A673 (cell line): ENCODE measurements at regions of chr6 and their contacts with region 1.

Region 1: DNA sequence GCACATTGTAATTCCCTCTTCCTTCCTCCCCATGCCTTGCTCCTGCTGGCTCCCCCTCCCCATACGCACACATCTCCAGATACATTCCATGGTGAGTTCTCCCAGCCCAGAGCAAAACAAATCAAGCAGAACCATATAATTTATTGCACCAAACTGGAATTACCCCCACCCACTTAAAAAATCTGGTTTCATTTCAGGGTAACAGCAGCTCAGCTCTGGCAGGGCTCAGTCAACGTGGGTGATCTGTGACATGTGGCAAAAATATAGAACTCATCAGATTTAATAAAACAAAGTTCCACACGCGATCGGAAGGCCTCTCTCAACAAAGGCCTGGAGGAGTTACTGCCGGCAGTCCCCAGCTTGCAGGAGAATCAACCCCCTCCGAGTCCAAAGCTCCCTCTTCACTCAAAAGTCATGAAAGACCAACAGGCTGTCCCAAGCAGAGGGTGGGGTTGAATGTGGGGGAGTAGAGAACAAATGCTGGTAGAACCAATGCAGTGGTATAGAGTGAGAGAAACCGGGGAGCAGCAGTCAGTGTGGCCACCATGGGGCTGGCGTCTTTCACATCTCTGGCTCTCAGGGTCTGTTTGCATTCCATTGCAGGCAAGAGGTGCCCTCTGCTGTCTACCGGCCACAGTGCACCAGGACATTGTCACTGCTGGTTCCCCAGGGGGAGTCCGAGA is 323.3 kb upstream of the NT5E start:
- DNase-seq: peak; percentile 81
- H3K4me3 ChIP-seq: peak overlapping the region; percentile 4
- H3K27ac ChIP-seq: peak overlapping the region; percentile 2
- H3K4me1 ChIP-seq: peaks cover 28% of the 10 kb centered on the region
- H3K27me3 ChIP-seq: no peaks in the 10 kb centered on the region
- CTCF ChIP-seq: peak; percentile 81

Region 2: DNA sequence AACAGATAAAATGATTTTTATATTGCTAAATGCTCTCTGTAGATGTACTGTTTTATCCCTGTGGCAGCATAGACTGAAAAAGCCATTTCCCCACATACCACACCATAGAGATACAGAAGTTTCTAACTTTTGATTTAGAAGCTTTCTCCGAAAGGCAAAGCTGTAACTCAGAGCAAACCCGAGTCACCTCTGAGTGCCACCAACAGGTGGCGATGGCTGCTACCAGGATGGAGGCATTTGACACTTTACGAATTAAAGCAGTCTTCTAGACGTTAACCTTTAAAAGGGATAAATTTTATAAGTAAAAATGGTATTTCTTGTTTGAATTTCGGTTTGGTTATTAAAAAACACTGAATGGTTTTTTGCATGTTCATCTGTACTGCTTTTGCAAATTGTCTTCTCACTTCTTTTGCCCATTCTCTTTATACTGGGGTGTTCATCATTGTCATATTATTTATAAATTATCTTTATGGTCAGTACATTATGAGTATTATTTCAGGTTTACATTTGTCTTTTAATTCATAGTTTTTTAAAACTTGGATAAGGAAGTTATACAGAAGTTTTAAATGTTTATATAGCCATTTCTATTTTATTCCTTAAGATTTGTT is 698.2 kb before region 1 on chr6:
- CTCF ChIA-PET with region 1: no interaction called
- POLR2A ChIA-PET with region 1: no interaction called
- intact Hi-C with region 1: loop called (anchors 2 kb)
- DNase-seq: peak; percentile 62
- H3K4me3 ChIP-seq: no peak overlapping the region
- H3K27ac ChIP-seq: no peak overlapping the region
- H3K4me1 ChIP-seq: no peaks in the 10 kb centered on the region
- H3K27me3 ChIP-seq: peaks cover 10% of the 10 kb centered on the region
- CTCF ChIP-seq: peak; percentile 87

Region 3: DNA sequence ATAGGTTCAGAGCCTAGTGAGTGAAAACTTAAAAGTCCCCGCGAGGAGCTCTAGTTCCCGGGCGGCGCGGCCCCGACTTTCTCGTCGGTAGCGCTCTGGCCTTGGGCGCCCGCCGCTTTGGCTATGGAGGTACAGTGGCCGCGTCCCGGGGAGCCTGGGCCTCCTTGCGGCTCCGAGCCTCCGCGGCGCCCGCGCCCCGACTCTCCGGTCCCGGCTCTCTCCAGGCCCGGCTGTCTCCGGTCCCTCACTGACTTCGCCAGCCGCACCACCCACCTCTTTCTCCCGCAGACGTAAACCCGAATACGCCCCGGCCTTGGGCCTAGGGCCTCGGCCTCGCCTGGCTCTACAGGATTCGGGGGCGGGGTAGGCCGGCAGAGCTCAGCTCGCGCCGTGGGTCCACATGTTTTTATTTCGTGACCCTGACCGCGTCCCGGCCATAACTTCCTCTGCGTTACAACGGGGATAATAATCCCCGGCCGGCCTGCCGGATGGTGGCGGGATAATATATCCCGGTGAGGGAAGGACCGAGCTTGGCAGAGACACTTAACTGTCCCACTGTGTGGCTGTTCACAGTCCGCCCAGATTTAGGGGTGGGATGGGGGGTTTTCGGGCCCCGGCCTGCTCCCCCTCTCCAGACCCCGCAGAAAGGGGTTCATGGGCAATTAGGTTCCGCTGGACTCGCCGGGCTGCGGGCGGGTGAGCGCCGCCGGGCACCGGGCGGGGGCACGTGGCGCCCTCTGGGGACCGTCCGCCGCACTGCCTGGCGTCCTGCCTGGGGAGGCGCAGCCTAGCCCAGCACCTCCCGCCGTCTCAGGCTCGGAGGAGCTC is 352.3 kb before region 1 on chr6:
- CTCF ChIA-PET with region 1: no interaction called
- POLR2A ChIA-PET with region 1: no interaction called
- intact Hi-C with region 1: loop called (anchors 10 kb)
- DNase-seq: peak; percentile 73
- H3K4me3 ChIP-seq: peak overlapping the region; percentile 60
- H3K27ac ChIP-seq: peak overlapping the region; percentile 73
- H3K4me1 ChIP-seq: no peaks in the 10 kb centered on the region
- H3K27me3 ChIP-seq: peaks cover 54% of the 10 kb centered on the region
- CTCF ChIP-seq: peak; percentile 63; the same call in 1 of the 2 replicates

Region 4: DNA sequence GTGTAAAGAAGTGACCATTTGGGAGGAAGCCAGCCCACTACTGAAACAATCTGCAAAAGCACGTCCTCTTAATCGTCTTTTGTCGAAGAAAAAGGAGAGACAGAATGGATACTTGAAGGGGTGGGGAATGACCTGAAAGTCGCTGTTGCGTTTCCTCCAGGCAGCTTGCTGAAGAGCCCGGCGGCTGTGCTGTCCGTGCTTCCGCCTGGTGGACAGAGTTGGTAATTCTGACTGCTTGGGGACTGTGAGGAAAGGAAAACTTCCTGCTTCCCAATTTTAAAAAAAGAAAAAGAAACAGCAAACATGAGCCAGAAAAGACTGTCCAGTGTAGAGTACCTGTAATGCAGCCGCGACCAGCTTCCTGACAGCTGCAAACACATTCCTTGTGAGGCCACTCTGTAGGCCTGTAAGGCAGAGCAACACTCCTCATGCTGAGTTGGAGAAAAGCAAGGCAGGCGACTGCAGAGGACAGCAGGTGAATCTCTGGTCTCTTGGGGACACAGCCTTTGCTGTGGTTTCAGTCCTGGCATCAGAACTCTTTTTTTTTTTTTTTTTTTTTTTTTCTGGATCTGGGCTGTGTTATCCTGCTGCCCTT is 111.1 kb before region 1 on chr6:
- CTCF ChIA-PET with region 1: no interaction called
- POLR2A ChIA-PET with region 1: no interaction called
- intact Hi-C with region 1: loop called (anchors 1 kb)
- DNase-seq: peak; percentile 77
- H3K4me3 ChIP-seq: no peak overlapping the region
- H3K27ac ChIP-seq: no peak overlapping the region
- H3K4me1 ChIP-seq: no peaks in the 10 kb centered on the region
- H3K27me3 ChIP-seq: no peaks in the 10 kb centered on the region
- CTCF ChIP-seq: peak; percentile 80

Region 5: DNA sequence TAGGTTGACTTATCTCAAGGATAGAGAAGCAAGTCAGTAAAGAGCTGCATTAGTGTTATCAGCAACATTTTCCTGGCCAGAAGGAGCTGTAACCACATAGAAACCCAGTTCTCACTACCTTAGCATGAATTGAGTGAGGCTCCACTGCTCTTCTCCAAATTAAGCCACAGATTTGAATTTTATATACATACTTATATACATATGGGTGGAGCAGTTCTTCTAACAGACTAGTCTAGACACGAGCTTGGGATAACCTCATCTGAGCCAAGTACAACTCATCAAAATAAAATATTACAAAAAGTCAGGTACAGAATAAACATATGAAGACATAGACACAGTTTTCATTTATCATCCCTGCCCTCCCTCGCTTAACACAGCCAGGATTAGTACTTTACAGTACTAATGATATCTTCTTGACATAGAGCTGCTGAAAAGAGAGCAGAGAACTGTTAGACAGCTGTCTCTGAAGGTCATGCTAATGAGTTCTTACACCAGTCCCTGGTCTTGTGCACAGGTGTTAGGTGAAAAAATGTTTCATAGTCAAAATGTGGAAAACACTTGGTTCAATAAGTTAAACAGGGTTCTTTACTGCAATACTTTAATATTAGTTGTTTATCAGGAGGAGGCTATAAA is 1663.3 kb after region 1 on chr6:
- CTCF ChIA-PET with region 1: no interaction called
- POLR2A ChIA-PET with region 1: no interaction called
- intact Hi-C with region 1: no loop called
- DNase-seq: no peak
- H3K4me3 ChIP-seq: no peak overlapping the region
- H3K27ac ChIP-seq: no peak overlapping the region
- H3K4me1 ChIP-seq: no peaks in the 10 kb centered on the region
- H3K27me3 ChIP-seq: no peaks in the 10 kb centered on the region
- CTCF ChIP-seq: no peak